PC-9 (cell line): ENCODE measurements at regions of chr1 and their contacts with region 1.

Region 1: GRCh38 chr1:31296486-31297276 is at the starts of genes SNRNP40 and ZCCHC17:
- DNase-seq: peak; percentile 92 to 97
- H3K4me3 ChIP-seq: peak within 1 kb of the TSS; percentile 72
- H3K27ac ChIP-seq: 0 out of 2 replicates have a peak within 1 kb of the TSS, but pooled peaks have one; percentile 24
- H3K4me1 ChIP-seq: peaks cover 9% of the 10 kb centered on the region; the same call in 1 of the 2 replicates
- H3K27me3 ChIP-seq: no peaks in the 10 kb centered on the region
- CTCF ChIP-seq: no peak
- total RNA-seq, gene SNRNP40: 56.0 and 59.5 TPM in 2 replicates
- total RNA-seq, gene ZCCHC17: 25.8 and 26.8 TPM in 2 replicates

Region 2: GRCh38 chr1:31422505-31423319 is 126.0 kb after region 1 on chr1:
- CTCF ChIA-PET with region 1: no interaction called
- POLR2A ChIA-PET with region 1: no interaction called
- intact Hi-C with region 1: loop called (anchors 10 kb)
- DNase-seq: peak; percentile 81 to 82
- H3K4me3 ChIP-seq: no peak overlapping the region
- H3K27ac ChIP-seq: peak overlapping the region; percentile 82
- H3K4me1 ChIP-seq: peaks cover 27% of the 10 kb centered on the region
- H3K27me3 ChIP-seq: no peaks in the 10 kb centered on the region
- CTCF ChIP-seq: peak; percentile 86

Region 3: DNA sequence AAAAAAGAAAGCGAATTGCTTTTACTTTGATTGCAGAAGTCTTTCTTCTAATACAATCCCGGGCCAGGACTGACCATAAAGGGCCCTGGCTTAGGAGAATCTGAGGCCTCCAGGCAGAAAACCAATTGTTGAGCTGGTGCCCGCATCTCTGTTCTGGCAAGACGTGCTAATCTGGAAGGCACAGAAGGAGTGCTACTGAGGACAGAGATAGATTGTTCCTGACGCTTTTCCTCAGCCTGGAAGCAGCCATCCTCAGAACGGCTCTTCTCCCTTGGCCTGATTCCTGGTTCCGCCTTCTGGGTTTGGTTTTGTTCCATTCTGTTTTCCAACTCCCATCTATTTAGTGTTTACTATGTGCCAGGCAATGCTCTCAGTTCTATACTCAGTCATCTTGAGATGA is 563.9 kb after region 1 on chr1:
- CTCF ChIA-PET with region 1: no interaction called
- POLR2A ChIA-PET with region 1: interaction called, 16 read pairs
- intact Hi-C with region 1: no loop called
- DNase-seq: no peak
- H3K4me3 ChIP-seq: no peak overlapping the region
- H3K27ac ChIP-seq: no peak overlapping the region
- H3K4me1 ChIP-seq: peaks cover 5% of the 10 kb centered on the region
- H3K27me3 ChIP-seq: no peaks in the 10 kb centered on the region
- CTCF ChIP-seq: no peak